CD4-positive, alpha-beta T cell (primary cell): ENCODE measurements at regions of chr13 and their contacts with region 1.

Region 1: DNA sequence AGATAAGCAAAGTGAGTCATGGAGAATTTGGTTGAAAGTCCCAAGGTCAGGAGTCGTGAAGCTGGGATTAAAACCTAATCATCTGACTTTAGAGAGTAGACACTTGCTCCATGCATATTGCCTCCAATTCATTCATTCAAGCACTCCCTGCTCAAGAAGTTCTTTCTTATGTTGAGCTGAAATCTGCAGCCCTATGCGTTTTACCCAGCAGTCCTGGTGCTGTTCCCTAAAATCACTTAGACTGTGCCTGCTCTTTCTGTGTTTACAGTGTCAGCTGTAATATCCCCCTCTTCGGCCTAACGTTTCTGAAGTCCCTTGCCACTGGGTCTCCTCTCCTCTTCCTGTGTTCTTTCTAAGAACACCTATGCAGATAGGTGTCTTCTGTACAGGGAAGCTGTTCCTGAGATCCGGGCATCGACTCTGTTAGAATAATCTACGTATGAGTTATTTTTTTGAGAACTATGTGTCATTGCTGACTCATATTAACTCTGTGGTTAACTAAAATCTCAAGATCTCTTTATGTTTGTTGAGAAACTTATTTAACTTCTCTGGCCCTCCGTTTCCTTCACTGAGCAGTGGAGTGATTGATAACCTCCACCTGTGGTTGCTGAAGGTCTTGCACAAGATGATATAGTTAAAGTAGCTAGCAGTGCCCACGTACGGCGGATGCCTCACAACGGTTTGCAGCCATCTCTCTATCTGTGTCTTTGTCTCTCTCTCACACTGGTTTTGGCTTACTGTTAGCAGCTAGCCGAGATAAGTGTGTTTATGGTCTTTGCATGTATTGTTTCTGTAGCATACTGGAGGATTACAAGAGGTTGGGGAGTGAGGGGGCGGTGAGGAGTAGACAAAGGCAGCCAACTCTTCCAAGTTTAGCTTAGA is 4.7 kb downstream of the ALOX5AP start:
- DNase-seq: peak; percentile 15 to 81 (median 54)
- ATAC-seq: peak; percentile 55
- H3K4me3 ChIP-seq: peak overlapping the region; percentile 42
- H3K4me3 Mint-ChIP-seq: peak overlapping the region; percentile 83
- H3K27ac ChIP-seq: peak overlapping the region; percentile 31 to 52
- H3K27ac Mint-ChIP-seq: peak overlapping the region; percentile 82
- H3K4me1 ChIP-seq: peaks cover 92% of the 10 kb centered on the region
- H3K4me1 Mint-ChIP-seq: peaks cover 80% of the 10 kb centered on the region
- H3K27me3 ChIP-seq: no peaks in the 10 kb centered on the region
- H3K27me3 Mint-ChIP-seq: no peaks in the 10 kb centered on the region
- CTCF ChIP-seq: no peak

Region 2: GRCh38 chr13:30679483-30680330 is 60.3 kb before region 1 on chr13:
- CTCF ChIA-PET with region 1: interaction called, 4 read pairs
- POLR2A ChIA-PET with region 1: no interaction called
- intact Hi-C with region 1: loop called (anchors 2 to 5 kb)
- DNase-seq: peak in 11 of 14 experiments; percentile 5 to 67 (median 26)
- ATAC-seq: peak; percentile 91
- H3K4me3 ChIP-seq: no peak overlapping the region
- H3K4me3 Mint-ChIP-seq: no peak overlapping the region
- H3K27ac ChIP-seq: no peak overlapping the region
- H3K27ac Mint-ChIP-seq: no peak overlapping the region
- H3K4me1 ChIP-seq: peaks cover 5% of the 10 kb centered on the region
- H3K4me1 Mint-ChIP-seq: peaks cover 12% of the 10 kb centered on the region
- H3K27me3 ChIP-seq: no peaks in the 10 kb centered on the region
- H3K27me3 Mint-ChIP-seq: no peaks in the 10 kb centered on the region
- CTCF ChIP-seq: peak; percentile 53

Region 3: DNA sequence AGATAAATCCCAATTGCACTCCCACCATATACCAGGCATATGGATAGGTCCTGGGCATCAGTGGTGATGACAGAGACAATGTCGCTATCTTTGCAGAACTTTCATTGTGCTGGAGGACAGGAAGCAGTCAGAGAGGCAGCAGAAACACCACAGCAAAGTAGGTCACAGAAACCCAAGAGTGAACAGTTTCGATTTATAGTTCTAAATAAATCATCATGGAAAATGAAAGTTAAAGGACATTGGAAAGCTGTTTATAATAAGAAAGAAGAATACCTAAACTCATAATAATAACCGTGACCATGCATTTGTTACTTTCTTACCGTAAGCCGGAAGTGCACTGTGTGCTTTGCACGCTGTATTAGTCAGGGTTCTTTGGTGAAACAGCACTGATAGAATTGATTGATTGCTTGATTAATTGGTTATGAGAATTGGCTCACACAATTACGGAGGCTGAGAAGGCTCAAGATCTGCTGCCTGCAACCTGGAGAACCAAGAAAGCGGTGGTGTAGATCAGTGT is 34.3 kb after region 1 on chr13:
- CTCF ChIA-PET with region 1: interaction called, 3 read pairs
- POLR2A ChIA-PET with region 1: interaction called, 3 read pairs
- intact Hi-C with region 1: loop called in 1 of 2 experiments (anchors 1 kb)
- DNase-seq: peak in 4 of 14 experiments; percentile 26 to 83 (median 58)
- ATAC-seq: peak; percentile 92
- H3K4me3 ChIP-seq: peak overlapping the region; percentile 26
- H3K4me3 Mint-ChIP-seq: peak overlapping the region; percentile 30
- H3K27ac ChIP-seq: peak overlapping the region in 1 of 2 donors; percentile 79
- H3K27ac Mint-ChIP-seq: peak overlapping the region; percentile 77
- H3K4me1 ChIP-seq: peaks cover 20% of the 10 kb centered on the region
- H3K4me1 Mint-ChIP-seq: peaks cover 17% of the 10 kb centered on the region
- H3K27me3 ChIP-seq: no peaks in the 10 kb centered on the region
- H3K27me3 Mint-ChIP-seq: no peaks in the 10 kb centered on the region
- CTCF ChIP-seq: no peak